HepG2 (cell line): ENCODE measurements at regions of chr3 and their contacts with region 1.

Region 1: DNA sequence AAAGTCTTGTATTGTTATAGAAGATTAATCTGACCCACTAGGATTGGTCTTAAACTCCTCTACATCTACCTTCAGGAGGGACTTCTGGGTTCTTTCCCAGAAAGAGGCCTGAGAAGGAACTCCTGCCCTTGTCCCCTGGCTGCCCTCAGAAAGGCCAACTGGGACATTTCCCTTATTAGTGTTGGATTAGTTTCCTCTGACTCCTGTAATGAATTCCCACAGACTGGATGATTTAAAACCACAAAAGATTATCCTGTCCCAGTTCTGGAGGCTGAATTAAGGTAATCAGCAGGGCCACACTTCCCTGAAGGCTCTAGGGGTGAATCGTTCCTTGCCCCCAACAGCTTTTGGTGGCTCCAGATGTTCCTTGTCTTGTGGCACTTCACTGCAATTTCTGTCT is 102.8 kb upstream of the NMNAT3 start:
- DNase-seq: no peak
- ATAC-seq: no peak
- H3K4me3 ChIP-seq: no peak overlapping the region
- H3K27ac ChIP-seq: no peak overlapping the region
- H3K4me1 ChIP-seq: no peaks in the 10 kb centered on the region
- H3K27me3 ChIP-seq: peaks cover 4 to 18% of the 10 kb centered on the region in 2 experiments; a peak in 2 of 5 replicates
- CTCF ChIP-seq: no peak
- EP300 ChIP-seq: no peak
- POLR2A ChIP-seq: no peak
- RAD21 ChIP-seq: no peak

Region 2: DNA sequence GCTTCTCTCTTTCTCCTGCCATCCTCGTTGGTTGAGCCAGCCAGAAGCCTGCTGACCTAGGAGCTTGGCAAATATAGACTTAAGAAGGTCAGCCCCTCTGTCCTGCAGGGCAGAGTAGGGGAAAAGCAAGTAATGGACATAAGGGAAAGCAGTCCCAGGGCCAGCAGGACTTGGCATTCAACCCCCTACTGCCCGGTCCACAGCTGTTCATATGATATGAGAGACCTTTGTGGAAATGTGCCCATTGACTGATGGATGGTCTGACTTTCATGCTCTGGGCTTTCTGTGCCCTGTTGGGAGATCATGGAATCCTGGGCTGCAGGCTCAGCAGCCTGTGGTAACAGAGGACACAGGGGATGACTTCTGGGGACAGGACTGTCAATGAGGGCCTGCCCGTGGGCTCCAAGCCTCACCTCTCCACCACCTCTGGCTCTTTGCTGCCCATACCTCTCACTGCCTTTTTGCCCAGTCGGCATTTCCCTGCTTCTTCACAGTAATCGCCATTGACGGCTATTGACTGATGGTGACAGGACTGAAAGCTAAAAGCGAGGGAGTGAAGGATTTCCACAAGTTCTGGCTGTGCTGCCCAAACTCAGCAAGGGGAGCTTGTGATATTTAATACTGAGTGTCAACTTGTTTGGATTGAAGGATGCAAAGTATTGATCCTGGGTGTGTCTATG is 42.8 kb before region 1 on chr3:
- CTCF ChIA-PET with region 1: no interaction called
- POLR2A ChIA-PET with region 1: no interaction called
- in situ Hi-C with region 1: no loop called
- intact Hi-C with region 1: loop called (anchors 1 kb)
- DNase-seq: no peak
- ATAC-seq: no peak
- H3K4me3 ChIP-seq: no peak overlapping the region
- H3K27ac ChIP-seq: no peak overlapping the region
- H3K4me1 ChIP-seq: no peaks in the 10 kb centered on the region
- H3K27me3 ChIP-seq: peaks cover 1 to 12% of the 10 kb centered on the region in 2 experiments; a peak in 3 of 5 replicates
- CTCF ChIP-seq: no peak
- EP300 ChIP-seq: no peak
- POLR2A ChIP-seq: no peak
- RAD21 ChIP-seq: no peak

Region 3: DNA sequence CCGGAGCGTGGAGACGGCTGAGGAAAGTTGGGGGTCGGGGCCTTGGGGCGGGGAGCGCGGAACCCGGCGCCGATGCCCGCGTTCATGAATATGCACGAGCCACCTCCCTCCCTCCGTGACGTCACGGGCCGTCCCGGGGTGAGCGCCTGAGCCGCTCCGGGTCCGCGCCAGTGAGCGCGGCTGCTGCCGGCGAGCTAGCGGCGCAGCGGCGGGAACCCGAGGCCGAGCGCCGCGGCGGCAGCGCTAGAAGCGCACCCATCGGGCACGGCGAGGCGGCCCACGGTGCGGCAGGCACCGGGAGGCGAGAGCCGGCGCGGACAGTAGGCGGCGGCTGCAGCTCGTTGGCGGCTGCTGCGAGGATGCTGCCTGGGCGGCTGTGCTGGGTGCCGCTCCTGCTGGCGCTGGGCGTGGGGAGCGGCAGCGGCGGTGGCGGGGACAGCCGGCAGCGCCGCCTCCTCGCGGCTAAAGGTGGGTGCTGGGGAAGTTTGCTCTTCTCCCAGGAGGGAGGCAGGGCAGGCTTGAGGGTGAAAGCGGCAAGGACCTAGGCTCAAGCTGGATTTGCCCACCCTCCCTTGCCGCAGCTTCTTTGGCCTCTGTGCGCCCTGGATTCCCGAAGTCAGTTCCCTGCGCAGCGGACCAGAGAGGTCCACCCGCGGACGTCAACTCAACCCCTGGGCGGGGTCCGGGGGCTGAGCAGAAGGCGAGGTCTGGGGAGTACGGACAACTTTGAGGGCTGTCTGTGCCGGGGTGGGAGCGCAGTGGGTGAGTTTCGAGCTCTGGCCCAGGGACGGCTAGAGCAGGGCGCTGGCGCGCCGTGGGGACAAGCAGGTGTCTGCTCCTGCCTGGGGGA is 154.6 kb after region 1 on chr3 and contains the start of gene CLSTN2:
- CTCF ChIA-PET with region 1: no interaction called
- POLR2A ChIA-PET with region 1: no interaction called
- in situ Hi-C with region 1: no loop called
- intact Hi-C with region 1: no loop called
- DNase-seq: no peak
- ATAC-seq: peak; percentile 73
- H3K4me3 ChIP-seq: peak within 1 kb of the TSS in 1 of 3 experiments; percentile 50; a peak in 1 of 6 replicates
- H3K27ac ChIP-seq: no peak within 1 kb of the TSS
- H3K4me1 ChIP-seq: peaks cover 12% of the 10 kb centered on the region
- H3K27me3 ChIP-seq: peaks cover 4 to 26% of the 10 kb centered on the region in 2 experiments
- CTCF ChIP-seq: no peak
- EP300 ChIP-seq: no peak
- POLR2A ChIP-seq: no peak
- RAD21 ChIP-seq: no peak
- total RNA-seq, gene CLSTN2: not detected in 2 replicates